Activated T-helper 1 cell treated with anti-CD3 and anti-CD28 coated beads, Interleukin-12 subunit alpha, Interleukin-12 subunit beta, Interleukin-2, Interleukin-4 antibody, amounts not matched to agents 30 ng/mL and 10 ng/mL and 1 ng/mL, durations not matched to agents 14 hours and 24 hours and 36 hours (primary cell): ENCODE measurements at regions of chr13 and their contacts with region 1.

Region 1: GRCh38 chr13:42969558-42970172 is 22.4 kb downstream of the EPSTI1 start:
- DNase-seq: peak; percentile 63
- H3K4me3 Mint-ChIP-seq: no peak overlapping the region
- H3K27ac Mint-ChIP-seq: no peak overlapping the region
- H3K4me1 Mint-ChIP-seq: peaks cover 35% of the 10 kb centered on the region
- H3K27me3 Mint-ChIP-seq: no peaks in the 10 kb centered on the region

Region 2: GRCh38 chr13:42991892-42992763 is 22.5 kb after region 1 on chr13 and contains the start of gene EPSTI1:
- intact Hi-C with region 1: loop called (anchors 1 kb)
- DNase-seq: peak; percentile 80
- H3K4me3 Mint-ChIP-seq: peak within 1 kb of the TSS; percentile 95
- H3K27ac Mint-ChIP-seq: peak within 1 kb of the TSS; percentile 97
- H3K4me1 Mint-ChIP-seq: peaks cover 76% of the 10 kb centered on the region
- H3K27me3 Mint-ChIP-seq: no peaks in the 10 kb centered on the region
- total RNA-seq, gene EPSTI1: 18.6 and 19.3 TPM in 2 replicates

Region 3: GRCh38 chr13:43041369-43041921 is 71.8 kb after region 1 on chr13:
- intact Hi-C with region 1: loop called (anchors 5 kb)
- DNase-seq: no peak
- H3K4me3 Mint-ChIP-seq: no peak overlapping the region
- H3K27ac Mint-ChIP-seq: no peak overlapping the region
- H3K4me1 Mint-ChIP-seq: peaks cover 51% of the 10 kb centered on the region
- H3K27me3 Mint-ChIP-seq: no peaks in the 10 kb centered on the region

Region 4: DNA sequence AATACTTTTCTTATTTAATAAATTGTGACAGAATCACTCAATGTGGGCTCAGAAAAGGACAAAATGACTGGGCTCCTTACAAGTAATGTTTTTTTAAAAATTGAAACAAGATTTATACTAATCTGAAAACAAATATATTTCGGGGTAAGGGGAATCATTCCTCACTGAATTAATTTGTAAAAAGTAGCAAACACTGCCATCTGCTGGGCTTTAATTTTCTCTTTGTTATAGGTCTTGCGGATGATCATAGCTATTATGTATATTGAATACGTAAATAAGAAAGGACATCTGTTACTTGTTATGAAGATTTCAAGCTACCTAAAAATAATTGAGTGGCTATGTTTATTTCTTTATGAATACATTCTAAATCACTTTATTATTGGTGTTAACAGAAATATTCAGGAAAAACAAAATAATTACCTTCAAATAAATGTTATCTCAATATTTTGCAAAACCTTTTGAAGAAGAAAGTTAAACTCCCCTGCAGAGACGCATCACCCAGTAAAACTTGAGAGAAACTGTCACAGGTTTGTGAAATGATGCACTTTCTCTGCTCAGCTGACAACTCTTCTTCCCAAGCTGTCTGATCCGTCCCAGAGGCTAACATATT is 834.9 kb after region 1 on chr13:
- intact Hi-C with region 1: loop called (anchors 1 kb)
- DNase-seq: no peak
- H3K4me3 Mint-ChIP-seq: no peak overlapping the region
- H3K27ac Mint-ChIP-seq: no peak overlapping the region
- H3K4me1 Mint-ChIP-seq: peaks cover 4% of the 10 kb centered on the region
- H3K27me3 Mint-ChIP-seq: peaks cover 3% of the 10 kb centered on the region